Dorsolateral prefrontal cortex (tissue), 120 donors: ENCODE measurements at regions of chrX and their contacts with region 1.

Region 1: DNA sequence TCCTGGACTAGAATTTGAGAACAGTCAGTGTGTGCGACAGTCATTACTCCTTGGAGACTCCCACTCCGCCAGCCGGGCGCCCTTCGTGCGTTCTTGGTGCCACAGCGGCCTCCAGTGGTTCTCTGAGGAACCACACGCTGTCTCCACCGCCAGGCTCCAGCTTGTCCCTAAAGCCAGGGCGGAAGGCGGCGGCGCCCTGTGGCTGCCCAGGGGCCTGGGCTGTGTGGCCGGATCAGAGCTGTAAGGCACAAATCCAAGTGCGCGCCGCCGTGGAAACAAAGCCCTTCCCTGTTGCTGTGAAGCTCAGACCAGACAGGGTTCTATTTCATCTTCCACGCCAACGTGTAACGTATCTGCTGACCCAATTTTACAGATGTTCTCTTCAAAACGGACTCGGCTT is 34.2 kb downstream of the IDS start:
- DNase-seq: peak; percentile 77 to 89 (median 82)
- H3K4me3 ChIP-seq: peak overlapping the region in 33 of 59 donors; percentile 4 to 52 (median 24)
- H3K27ac ChIP-seq: peak overlapping the region in 21 of 59 donors; percentile 4 to 59 (median 29)
- H3K27me3 ChIP-seq: peaks cover 0 to 78% (median 12%) of the 10 kb centered on the region in 45 donors
- CTCF ChIP-seq: peak; percentile 54 to 96 (median 88)

Region 2: GRCh38 chrX:148133105-148133725 is 1337.7 kb before region 1 on chrX:
- intact Hi-C with region 1: loop called in 1 of 2 experiments (anchors 2 kb)
- DNase-seq: no peak
- H3K4me3 ChIP-seq: no peak overlapping the region
- H3K27ac ChIP-seq: no peak overlapping the region
- H3K27me3 ChIP-seq: peaks cover 0 to 50% (median 6%) of the 10 kb centered on the region in 45 donors
- CTCF ChIP-seq: peak in 32 of 56 donors; percentile 9 to 58 (median 32)